Activated CD8-positive, alpha-beta T cell treated with anti-CD3 and anti-CD28 coated beads for 36 hours (primary cell): ENCODE measurements at regions of chr3 and their contacts with region 1.

Region 1: GRCh38 chr3:71725279-71725991 is at the start of gene EIF4E3:
- DNase-seq: peak; percentile 31
- ATAC-seq: peak; percentile 43
- H3K4me3 Mint-ChIP-seq: peak within 1 kb of the TSS; percentile 99
- H3K27ac Mint-ChIP-seq: peak within 1 kb of the TSS; percentile 98
- H3K4me1 Mint-ChIP-seq: peaks cover 64% of the 10 kb centered on the region
- H3K27me3 Mint-ChIP-seq: no peaks in the 10 kb centered on the region
- CTCF ChIP-seq: no peak
- total RNA-seq, gene EIF4E3: 29.3 to 30.4 TPM

Region 2: DNA sequence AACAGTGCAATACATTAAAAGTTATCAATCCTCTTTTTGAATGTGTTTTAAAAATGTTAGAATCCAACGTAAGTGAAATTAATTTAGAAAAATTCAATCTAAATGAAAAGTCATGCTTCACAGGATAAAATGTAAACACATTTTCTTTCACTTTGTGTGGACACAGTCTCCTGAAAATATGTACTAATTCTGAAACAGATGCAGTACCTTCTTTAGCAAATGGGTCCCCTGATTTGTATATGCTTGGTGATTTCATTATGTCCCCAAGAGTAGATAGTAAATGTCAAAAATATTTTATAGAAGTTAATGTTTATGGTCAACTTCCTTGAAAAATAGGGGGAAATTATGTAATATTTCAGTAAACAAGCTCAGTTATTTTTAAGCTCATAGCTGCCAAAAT is 170.8 kb before region 1 on chr3:
- CTCF ChIA-PET with region 1: no interaction called
- POLR2A ChIA-PET with region 1: no interaction called
- intact Hi-C with region 1: no loop called
- DNase-seq: no peak
- ATAC-seq: no peak
- H3K4me3 Mint-ChIP-seq: no peak overlapping the region
- H3K27ac Mint-ChIP-seq: no peak overlapping the region
- H3K4me1 Mint-ChIP-seq: peaks cover 3% of the 10 kb centered on the region
- H3K27me3 Mint-ChIP-seq: no peaks in the 10 kb centered on the region
- CTCF ChIP-seq: no peak

Region 3: GRCh38 chr3:71744738-71745137 is 19.3 kb after region 1 on chr3:
- CTCF ChIA-PET with region 1: interaction called, 20 read pairs
- POLR2A ChIA-PET with region 1: no interaction called
- intact Hi-C with region 1: no loop called
- DNase-seq: no peak
- ATAC-seq: no peak
- H3K4me3 Mint-ChIP-seq: no peak overlapping the region
- H3K27ac Mint-ChIP-seq: no peak overlapping the region
- H3K4me1 Mint-ChIP-seq: no peaks in the 10 kb centered on the region
- H3K27me3 Mint-ChIP-seq: no peaks in the 10 kb centered on the region
- CTCF ChIP-seq: no peak

Region 4: DNA sequence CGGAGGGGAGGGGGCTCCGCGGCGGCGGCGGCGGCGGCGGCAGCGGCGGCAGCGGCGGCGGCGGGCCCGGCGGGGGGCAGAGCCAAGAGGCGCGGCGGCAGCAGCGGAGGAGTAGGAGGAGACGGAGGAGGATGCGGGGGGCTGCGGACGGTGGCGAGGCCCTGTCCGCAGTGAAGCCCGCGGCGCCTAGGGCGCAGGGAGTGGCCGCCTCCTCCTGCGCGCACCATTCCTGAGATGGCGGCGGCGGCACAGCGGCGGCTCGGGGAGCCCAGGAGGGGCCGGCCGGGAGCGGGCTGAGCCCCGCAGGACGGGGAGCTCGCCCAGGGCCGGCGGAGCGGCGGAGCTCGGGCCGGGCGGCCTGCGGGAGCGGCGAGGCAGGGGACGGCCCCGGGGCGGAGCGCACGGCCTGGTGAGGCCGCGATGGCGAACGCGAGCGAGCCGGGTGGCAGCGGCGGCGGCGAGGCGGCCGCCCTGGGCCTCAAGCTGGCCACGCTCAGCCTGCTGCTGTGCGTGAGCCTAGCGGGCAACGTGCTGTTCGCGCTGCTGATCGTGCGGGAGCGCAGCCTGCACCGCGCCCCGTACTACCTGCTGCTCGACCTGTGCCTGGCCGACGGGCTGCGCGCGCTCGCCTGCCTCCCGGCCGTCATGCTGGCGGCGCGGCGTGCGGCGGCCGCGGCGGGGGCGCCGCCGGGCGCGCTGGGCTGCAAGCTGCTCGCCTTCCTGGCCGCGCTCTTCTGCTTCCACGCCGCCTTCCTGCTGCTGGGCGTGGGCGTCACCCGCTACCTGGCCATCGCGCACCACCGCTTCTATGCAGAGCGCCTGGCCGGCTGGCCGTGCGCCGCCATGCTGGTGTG is 28.4 kb after region 1 on chr3 and contains the start of gene GPR27:
- CTCF ChIA-PET with region 1: interaction called, 15 read pairs
- POLR2A ChIA-PET with region 1: interaction called, 4 read pairs
- intact Hi-C with region 1: no loop called
- DNase-seq: peak; percentile 28
- ATAC-seq: peak; percentile 67
- H3K4me3 Mint-ChIP-seq: peak within 1 kb of the TSS; percentile 62
- H3K27ac Mint-ChIP-seq: no peak within 1 kb of the TSS
- H3K4me1 Mint-ChIP-seq: peaks cover 7% of the 10 kb centered on the region
- H3K27me3 Mint-ChIP-seq: peaks cover 38% of the 10 kb centered on the region
- CTCF ChIP-seq: no peak
- total RNA-seq, gene GPR27: 0.40 to 0.47 TPM

Region 5: DNA sequence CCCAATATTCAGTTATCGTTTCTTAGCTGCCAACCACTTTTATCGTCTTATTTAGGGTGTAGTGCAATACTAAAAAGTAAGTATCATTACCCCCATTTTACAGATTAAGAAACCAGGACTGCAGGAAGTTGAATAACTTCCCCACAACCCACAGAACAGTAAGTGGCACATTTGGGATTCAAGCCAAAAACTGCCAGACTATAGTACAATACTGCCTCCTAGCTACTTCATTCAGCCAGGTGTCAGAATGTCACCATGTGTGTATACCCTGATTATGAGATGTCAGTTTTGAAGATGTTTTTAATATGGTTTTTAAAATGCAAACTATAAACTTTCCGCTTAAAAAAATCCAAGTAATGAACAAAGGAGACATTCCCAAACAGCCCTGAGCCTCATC is 133.7 kb after region 1 on chr3:
- CTCF ChIA-PET with region 1: interaction called, 43 read pairs
- POLR2A ChIA-PET with region 1: no interaction called
- intact Hi-C with region 1: loop called (anchors 5 kb)
- DNase-seq: peak; percentile 12
- ATAC-seq: peak; percentile 70
- H3K4me3 Mint-ChIP-seq: no peak overlapping the region
- H3K27ac Mint-ChIP-seq: no peak overlapping the region
- H3K4me1 Mint-ChIP-seq: peaks cover 4% of the 10 kb centered on the region
- H3K27me3 Mint-ChIP-seq: peaks cover 17% of the 10 kb centered on the region
- CTCF ChIP-seq: peak; percentile 57

Region 6: DNA sequence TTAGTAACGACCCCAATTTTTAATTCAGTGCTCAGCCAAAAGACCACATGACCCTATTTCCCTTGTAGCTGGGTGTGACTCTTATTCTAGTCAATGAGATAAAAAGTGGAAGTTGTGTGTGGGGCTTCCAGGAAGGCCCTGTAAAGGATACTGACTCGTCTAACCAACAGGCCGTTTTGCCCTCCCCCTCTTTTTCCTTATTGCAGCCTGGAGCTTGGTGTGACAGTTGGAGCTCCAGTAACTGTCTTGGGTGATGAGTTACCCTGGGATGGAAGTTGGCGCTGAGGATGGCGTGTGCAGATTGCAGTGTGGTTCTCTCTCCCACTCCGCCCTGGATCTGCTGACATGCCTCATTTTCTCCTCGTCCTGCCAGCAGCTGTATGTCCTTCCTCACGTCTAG is 268.8 kb after region 1 on chr3:
- CTCF ChIA-PET with region 1: no interaction called
- POLR2A ChIA-PET with region 1: no interaction called
- intact Hi-C with region 1: no loop called
- DNase-seq: peak; percentile 18
- ATAC-seq: peak; percentile 42
- H3K4me3 Mint-ChIP-seq: no peak overlapping the region
- H3K27ac Mint-ChIP-seq: no peak overlapping the region
- H3K4me1 Mint-ChIP-seq: peaks cover 14% of the 10 kb centered on the region
- H3K27me3 Mint-ChIP-seq: no peaks in the 10 kb centered on the region
- CTCF ChIP-seq: no peak